Heart left ventricle (tissue), 16 donors: ENCODE measurements at regions of chr20 and their contacts with region 1.

Region 1: GRCh38 chr20:29326376-29327070 is 1930.9 kb upstream of the DEFB115 start:
- DNase-seq: peak in 1 of 5 donors; percentile 67
- ATAC-seq: peak in 3 of 4 donors; percentile 33 to 75 (median 50)
- H3K4me3 ChIP-seq: no peak overlapping the region
- H3K27ac ChIP-seq: no peak overlapping the region
- H3K4me1 ChIP-seq: no peaks in the 10 kb centered on the region
- H3K27me3 ChIP-seq: peaks cover 0 to 39% (median 0%) of the 10 kb centered on the region in 9 donors
- CTCF ChIP-seq: no peak
- POLR2A ChIP-seq: no peak

Region 2: DNA sequence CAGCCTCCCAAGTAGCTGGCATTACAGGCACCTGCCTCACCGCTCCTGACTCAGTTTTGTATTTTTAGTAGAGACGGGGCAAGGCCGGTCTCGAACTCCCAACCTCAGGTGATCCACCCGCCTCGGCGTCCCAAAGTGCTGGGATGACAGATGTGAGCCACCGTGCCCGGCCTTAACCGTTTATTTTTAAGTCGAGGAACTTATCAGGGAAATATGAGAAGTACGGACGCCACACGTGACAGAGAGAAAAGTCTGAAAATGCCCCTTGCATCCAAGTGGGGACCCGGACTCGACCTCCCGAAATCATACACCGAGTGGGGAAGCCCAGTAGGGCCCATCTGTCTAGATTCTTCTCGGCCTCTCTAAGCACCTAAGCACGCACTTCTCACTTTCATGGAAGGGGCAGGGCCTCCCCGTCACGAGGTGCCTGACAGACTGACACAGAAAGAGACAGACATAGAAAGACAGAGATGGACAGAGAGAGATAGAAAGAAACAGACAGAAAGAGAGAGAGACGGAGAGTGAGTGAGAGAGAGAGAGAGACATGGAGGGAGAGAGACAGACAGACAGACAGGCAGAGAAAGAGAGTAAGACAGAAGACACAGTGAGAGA is 1174.4 kb after region 1 on chr20:
- intact Hi-C with region 1: loop called in 1 of 10 experiments (anchors 10 kb)
- DNase-seq: no peak
- ATAC-seq: no peak
- H3K4me3 ChIP-seq: no peak overlapping the region
- H3K27ac ChIP-seq: no peak overlapping the region
- H3K4me1 ChIP-seq: no peaks in the 10 kb centered on the region
- H3K27me3 ChIP-seq: peaks cover 0 to 56% (median 0%) of the 10 kb centered on the region in 9 donors
- CTCF ChIP-seq: no peak
- POLR2A ChIP-seq: no peak